ENCODE measurements at regions of chr3 and their contacts with region 1.

Region 1: DNA sequence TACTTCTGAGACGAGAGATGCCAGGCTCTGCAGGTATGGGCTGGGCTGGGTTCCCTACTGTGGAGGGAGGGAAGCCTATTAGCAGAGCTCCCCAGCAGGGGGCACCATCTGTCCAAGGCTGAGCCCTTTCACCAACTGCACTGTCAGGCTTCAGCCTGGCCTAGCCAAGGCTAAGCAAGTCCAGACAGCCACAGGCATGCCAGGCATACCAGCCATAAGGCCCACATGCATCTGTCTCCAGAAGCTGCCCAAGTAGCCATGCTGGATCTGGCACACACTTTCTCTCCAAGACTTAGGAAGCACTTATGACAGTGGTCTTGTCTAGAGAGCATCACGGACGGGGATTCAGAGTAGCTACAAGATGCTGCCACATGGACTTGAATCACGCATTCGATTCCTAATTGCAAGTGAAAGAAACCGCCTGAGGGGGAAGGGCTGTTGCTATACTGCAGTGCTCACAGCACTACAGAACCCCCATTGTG is 28.3 kb downstream of the RUVBL1 start:
- DNase-seq: peak; percentile 90 to 93
- ATAC-seq: peak; percentile 92
- H3K4me3 ChIP-seq: no peak overlapping the region
- H3K27ac ChIP-seq: no peak overlapping the region
- H3K4me1 ChIP-seq: no peaks in the 10 kb centered on the region
- H3K27me3 ChIP-seq: no peaks in the 10 kb centered on the region

Region 2: DNA sequence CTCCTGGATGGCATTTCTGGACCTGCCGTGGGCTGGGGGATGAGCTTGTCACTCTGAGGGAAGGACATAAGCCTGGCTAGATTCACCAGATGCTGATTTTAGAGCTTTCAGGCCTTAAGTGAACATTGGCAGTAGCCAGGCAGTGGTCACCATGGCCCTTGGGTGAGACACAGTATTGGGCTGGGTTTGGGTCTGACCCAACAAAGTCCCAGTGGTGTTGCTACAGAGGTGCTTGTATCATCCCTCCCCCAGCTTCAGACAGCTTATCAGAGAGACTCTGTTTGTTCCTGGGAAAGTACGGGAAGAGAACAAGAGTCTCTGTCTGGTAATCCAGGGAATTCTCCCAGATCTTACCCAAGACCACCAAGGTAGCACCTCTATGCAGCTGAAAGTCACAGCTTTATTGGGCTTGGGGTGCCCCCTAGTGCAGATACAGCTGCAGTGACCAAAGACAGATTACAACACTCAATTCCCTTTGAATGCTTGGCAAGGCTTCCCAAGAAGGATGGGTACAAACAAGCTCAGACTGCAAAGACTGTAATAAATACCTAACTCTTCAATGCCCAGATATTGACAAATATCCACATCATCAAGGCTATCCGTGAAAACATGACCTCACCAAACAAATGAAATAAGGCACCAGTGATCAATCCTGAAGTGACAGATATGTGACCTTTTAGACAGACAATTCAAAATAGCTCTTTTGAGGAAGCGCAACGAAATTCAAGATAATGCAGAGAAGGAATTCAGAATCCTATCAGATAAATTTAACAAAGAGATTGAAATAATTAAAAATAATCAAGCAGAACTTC is 38.2 kb after region 1 on chr3:
- intact Hi-C with region 1: loop called in 1 of 2 experiments (anchors 5 kb)
- DNase-seq: no peak
- ATAC-seq: no peak
- H3K4me3 ChIP-seq: no peak overlapping the region
- H3K27ac ChIP-seq: no peak overlapping the region
- H3K4me1 ChIP-seq: no peaks in the 10 kb centered on the region
- H3K27me3 ChIP-seq: no peaks in the 10 kb centered on the region

Region 3: GRCh38 chr3:128497387-128498126 is 402.3 kb after region 1 on chr3:
- intact Hi-C with region 1: loop called in 1 of 2 experiments (anchors 2 kb)
- DNase-seq: peak in 1 of 2 donors; percentile 90
- ATAC-seq: peak; percentile 63
- H3K4me3 ChIP-seq: peak overlapping the region; percentile 32 to 77
- H3K27ac ChIP-seq: no peak overlapping the region
- H3K4me1 ChIP-seq: no peaks in the 10 kb centered on the region
- H3K27me3 ChIP-seq: no peaks in the 10 kb centered on the region

Region 4: DNA sequence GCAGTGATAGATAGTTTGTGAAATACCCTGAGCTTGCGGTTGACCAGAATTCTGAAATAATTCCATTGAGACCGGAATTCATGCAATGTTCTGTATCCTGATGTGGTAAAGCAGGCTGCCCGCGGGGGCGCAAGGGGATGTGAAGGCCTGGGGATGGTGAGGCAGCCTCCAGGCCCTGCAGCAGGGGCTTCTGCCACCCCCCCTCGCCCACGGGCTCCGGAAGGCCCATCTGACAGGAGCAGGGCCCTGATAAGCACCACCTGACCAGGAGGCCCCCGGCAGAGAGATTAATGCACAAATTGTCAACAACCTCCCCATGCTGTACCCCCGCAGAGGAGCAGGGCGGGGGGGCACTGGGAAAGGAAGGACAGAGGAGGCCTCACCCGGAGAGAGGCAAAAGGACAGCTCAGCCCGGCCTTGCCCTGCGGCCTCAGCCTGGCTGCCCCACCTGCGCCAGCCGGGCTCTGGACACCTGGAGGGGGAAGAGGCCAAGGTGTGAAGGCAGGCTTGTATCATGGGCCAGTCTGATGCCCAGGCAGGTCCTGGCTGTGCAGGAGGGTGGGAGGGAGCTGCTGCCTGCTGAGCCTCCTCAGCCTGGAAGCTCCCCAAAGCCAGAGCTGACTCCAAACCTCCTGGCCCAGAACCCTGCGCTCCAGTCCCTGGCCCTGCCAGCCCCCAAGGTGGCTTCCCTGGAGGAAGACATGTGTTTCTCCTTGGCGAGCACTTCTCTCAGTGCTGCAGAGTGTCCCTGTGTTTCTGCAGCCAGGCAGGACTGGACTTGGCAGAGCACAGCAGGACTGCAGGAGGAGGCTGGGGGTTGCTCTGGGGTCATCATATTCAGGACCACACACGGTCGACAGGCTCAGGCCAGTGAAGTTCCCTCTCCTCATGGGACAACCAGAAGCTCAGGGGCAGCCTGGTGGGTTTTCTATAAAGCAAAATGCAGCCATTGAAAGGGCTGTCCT is 508.8 kb after region 1 on chr3:
- intact Hi-C with region 1: loop called in 1 of 2 experiments (anchors 10 kb)
- DNase-seq: no peak
- ATAC-seq: no peak
- H3K4me3 ChIP-seq: no peak overlapping the region
- H3K27ac ChIP-seq: no peak overlapping the region
- H3K4me1 ChIP-seq: no peaks in the 10 kb centered on the region
- H3K27me3 ChIP-seq: no peaks in the 10 kb centered on the region